AG04450 (cell line): ENCODE measurements at regions of chr6 and their contacts with region 1.

Region 1: DNA sequence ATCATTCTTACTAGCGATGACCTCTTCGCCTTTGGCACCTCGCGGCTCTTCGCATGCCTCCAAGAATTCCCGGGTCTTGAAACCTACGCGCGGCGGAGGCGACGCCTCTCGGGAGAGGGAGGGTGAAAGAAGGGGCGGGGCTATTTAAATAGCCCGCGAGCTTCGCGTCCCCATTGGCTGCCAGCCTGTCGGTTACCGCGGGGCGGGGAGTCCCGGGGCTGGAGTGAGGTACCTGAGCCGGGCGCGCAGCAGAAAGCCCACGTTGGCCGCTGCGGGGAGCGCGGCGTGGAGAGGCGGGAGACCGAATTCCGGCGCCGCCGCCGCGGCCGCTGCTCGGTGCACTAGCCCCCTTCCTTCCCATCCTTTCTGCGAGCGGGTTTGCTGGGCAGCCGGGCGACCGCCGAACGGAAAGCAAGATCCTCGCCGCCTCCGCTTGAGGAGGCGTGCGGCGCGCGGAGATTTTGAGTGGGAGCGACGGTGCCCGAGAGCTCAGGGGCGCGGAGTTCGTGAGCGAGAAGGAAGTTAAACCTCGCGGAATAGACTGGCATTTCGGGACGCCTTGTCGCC is at the start of gene BMP6:
- DNase-seq: peak; percentile 20
- H3K4me3 ChIP-seq: peak within 1 kb of the TSS; percentile 62
- H3K27ac ChIP-seq: no peak within 1 kb of the TSS
- H3K27me3 ChIP-seq: peaks cover 31% of the 10 kb centered on the region
- CTCF ChIP-seq: no peak
- polyA plus RNA-seq, gene BMP6: 0.69 and 0.77 TPM in 2 replicates

Region 2: DNA sequence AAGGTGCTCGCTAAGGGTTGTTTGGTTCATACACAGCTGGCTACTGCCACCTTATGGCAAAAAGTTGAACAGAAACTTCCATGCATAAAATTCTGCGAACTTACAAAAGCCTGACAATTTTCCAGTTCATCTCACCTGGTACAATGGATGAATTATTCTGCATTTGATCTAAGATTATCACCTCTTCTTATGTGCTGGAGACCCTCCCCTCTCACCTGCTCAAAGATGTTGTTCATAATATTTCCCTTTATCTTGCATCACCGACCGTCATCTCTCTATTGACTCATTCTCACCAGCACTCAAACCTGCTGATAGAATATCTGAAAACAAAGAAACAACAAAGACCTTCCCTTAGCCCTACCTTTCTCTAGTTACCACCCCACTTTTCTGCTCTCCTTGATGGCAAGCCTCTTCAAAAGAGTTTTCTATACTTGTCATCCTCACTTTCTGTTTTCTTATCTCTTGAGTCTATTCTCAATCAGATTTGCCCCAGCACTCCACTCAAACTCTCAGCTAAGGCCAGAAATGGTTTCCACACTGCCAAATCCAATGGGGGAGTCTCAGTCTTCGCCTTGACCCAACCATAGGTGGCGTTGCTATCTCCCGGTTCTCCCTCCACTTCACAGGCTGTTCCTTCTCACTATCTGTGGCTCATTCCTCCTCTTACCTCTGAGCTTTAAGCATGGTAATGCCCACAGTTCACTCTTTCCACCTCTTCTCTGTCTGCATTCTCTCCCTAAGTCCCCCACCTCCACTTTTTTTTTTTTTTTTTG is 110.1 kb before region 1 on chr6:
- CTCF ChIA-PET with region 1: no interaction called
- POLR2A ChIA-PET with region 1: no interaction called
- DNase-seq: no peak
- H3K4me3 ChIP-seq: no peak overlapping the region
- H3K27ac ChIP-seq: no peak overlapping the region
- H3K27me3 ChIP-seq: no peaks in the 10 kb centered on the region
- CTCF ChIP-seq: peak; percentile 79

Region 3: DNA sequence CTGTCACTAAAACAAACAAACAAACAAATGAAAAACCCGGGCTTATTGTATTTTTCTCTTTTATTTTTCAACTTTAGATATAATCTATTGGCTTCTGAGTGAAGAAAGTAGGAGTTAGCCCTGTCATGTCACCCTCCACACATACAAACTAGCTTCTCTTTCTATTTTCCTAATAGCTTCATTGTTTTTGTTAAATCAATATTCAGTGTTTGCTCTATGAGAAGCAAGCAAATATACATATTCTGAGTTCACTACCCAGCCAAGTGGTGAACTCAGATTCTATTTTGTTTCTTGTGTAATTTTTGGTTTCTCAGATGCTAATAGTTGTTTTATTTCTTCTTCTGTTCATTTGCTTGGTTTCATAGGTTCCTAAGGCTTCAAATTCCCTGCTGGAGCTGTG is 69.6 kb before region 1 on chr6:
- CTCF ChIA-PET with region 1: no interaction called
- POLR2A ChIA-PET with region 1: no interaction called
- DNase-seq: no peak
- H3K4me3 ChIP-seq: no peak overlapping the region
- H3K27ac ChIP-seq: no peak overlapping the region
- H3K27me3 ChIP-seq: peaks cover 4% of the 10 kb centered on the region
- CTCF ChIP-seq: no peak

Region 4: GRCh38 chr6:7697820-7698623 is 27.9 kb before region 1 on chr6:
- CTCF ChIA-PET with region 1: interaction called, 25 read pairs
- POLR2A ChIA-PET with region 1: interaction called, 4 read pairs
- DNase-seq: peak; percentile 78
- H3K4me3 ChIP-seq: peak overlapping the region; percentile 38
- H3K27ac ChIP-seq: peak overlapping the region; percentile 89
- H3K27me3 ChIP-seq: no peaks in the 10 kb centered on the region
- CTCF ChIP-seq: no peak

Region 5: DNA sequence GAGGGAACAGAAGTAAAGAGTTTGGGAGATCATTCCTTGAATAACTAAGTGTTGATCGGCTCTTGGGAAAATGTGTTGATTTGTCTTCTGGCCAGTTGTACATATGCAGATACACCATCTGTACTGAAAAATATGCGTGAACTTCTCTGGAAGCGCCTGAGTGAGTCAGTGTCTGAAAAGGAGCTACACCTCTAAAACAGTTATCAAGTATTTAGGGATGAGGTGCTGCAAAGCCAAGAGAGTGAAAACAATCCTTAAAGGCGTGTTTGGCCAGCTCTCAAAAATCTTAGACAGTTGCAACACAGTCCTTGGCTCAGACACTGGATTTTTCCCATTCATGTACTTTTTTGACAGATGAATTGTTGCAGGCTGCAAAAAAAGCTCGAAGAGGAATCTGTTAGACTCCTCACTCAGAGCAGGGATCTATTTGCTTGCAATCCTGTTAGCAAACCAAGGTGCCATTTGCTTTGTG is 61.2 kb after region 1 on chr6:
- CTCF ChIA-PET with region 1: interaction called, 15 read pairs
- POLR2A ChIA-PET with region 1: interaction called, 8 read pairs
- DNase-seq: peak; percentile 26
- H3K4me3 ChIP-seq: no peak overlapping the region
- H3K27ac ChIP-seq: no peak overlapping the region
- H3K27me3 ChIP-seq: peaks cover 3% of the 10 kb centered on the region
- CTCF ChIP-seq: no peak

Region 6: GRCh38 chr6:7979831-7980230 is 253.9 kb after region 1 on chr6:
- CTCF ChIA-PET with region 1: interaction called, 11 read pairs
- POLR2A ChIA-PET with region 1: no interaction called
- DNase-seq: no peak
- H3K4me3 ChIP-seq: no peak overlapping the region
- H3K27ac ChIP-seq: no peak overlapping the region
- H3K27me3 ChIP-seq: no peaks in the 10 kb centered on the region
- CTCF ChIP-seq: no peak

Region 7: GRCh38 chr6:8006208-8006607 is 280.3 kb after region 1 on chr6:
- CTCF ChIA-PET with region 1: interaction called, 56 read pairs
- POLR2A ChIA-PET with region 1: no interaction called
- DNase-seq: no peak
- H3K4me3 ChIP-seq: no peak overlapping the region
- H3K27ac ChIP-seq: no peak overlapping the region
- H3K27me3 ChIP-seq: no peaks in the 10 kb centered on the region
- CTCF ChIP-seq: peak; percentile 53